ENCODE measurements at regions of chr11 and their contacts with region 1.

Region 1: GRCh38 chr11:47152953-47153950 is 23.4 kb downstream of the ARFGAP2 start:
- DNase-seq: peak; percentile 82
- H3K27ac ChIP-seq: peak overlapping the region; percentile 17; the same call in 1 of the 2 replicates
- CTCF ChIP-seq: peak; percentile 97

Region 2: DNA sequence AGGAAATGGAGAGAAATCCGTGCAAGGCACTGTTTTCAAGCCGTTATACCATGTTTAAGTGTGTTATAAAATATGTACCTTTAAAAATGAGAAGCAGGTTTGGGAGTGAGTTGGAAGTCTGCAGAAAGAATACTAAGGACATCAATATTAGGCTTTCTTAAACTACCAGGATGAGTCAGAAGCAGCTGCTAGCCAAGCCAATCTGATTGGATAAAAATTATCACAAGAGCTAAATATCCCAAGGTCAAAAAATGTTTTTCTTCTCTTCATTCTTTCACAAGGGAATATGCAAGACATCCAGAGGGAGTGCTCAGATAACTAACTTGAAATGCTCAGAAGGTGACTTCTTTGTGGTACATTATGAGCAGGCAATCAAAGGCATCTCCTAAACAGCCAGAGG is 287.9 kb before region 1 on chr11:
- CTCF ChIA-PET with region 1: interaction called, 11 read pairs
- POLR2A ChIA-PET with region 1: no interaction called
- DNase-seq: no peak
- H3K27ac ChIP-seq: no peak overlapping the region
- CTCF ChIP-seq: no peak

Region 3: DNA sequence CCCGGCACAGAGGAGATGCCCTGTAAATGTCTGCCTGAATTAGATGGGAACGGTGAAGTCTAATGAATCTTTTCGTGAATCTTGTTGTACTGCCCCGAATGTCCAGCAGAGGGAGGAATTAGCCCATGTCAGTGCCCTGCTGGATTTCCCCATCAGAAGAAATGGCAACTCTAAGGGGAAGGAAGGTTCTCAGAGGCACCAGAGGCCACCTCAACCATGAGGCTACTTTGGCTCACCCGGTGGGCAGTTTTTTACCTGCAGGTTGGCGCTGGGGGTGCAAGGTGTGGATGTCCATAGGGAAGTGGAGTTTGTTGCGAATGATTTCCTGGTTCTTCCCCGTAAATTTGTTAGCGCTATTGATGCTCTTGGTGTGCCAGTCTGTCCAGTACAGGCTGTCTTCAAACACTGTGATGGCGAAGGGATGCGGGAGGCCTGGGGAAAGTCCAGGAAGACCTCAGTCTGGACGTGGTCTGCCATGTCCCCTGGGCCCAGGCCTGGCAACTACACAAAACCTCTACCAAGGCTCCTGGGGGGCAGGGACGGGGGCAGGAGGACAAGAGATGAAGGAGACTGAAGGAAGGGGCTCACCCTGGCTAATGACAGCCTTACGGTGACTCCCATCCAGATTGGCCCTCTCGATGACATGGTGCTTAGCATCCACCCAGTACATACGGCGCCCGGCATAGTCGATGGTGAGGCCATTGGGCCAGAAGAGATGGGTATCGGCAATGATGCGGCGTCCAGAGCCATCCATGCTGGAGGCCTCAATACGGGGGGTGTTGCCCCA is 263.4 kb before region 1 on chr11:
- CTCF ChIA-PET with region 1: interaction called, 13 read pairs
- POLR2A ChIA-PET with region 1: no interaction called
- DNase-seq: peak; percentile 72
- H3K27ac ChIP-seq: no peak overlapping the region
- CTCF ChIP-seq: peak; percentile 88

Region 4: DNA sequence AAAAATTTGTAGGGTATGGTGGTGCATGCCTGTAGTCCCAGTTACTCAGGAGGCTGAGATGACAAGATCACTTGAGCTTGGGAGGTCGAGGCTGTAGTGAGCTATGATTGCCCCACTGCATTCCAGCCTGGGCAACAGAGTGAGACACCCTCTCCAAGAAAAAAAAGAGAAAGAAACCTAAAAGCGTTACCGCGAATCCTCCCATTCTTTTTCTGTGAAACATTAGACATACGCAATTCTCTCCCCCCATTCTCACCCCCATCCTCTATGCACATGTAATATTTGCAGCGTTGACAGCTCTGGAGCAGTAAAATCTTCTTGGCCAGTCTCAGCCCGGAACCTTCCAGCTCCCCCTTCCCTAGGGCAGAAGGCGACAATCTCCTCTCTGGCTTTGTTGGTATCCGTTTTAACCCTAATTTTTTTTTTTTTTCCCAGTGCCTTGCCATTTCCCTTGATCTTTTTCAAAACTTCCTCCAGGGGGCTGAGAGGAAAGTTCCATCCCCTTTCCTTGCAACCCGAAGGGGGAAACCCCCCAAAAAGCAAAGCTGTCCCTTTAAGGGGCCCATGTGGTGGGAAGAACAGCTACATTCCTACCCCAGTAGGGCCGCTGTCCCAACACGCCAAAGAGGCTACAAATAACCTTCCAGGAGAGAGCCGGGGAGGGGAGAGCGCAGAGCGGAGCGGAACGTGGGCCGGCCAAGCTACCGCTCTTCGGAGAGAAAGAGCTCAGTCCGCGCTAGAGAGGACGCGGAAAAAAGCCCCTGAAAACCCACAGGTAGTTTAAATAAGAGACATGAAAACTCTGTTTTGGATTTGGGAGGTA is 236.8 kb before region 1 on chr11:
- CTCF ChIA-PET with region 1: interaction called, 14 read pairs
- POLR2A ChIA-PET with region 1: no interaction called
- DNase-seq: peak; percentile 96
- H3K27ac ChIP-seq: peak overlapping the region; percentile 93
- CTCF ChIP-seq: no peak